ENCODE measurements at regions of chr3 and their contacts with region 1.

Region 1: GRCh38 chr3:183895296-183895695 is 10.6 kb upstream of the PARL start:
- DNase-seq: no peak
- ATAC-seq: peak; percentile 77
- H3K4me3 ChIP-seq: no peak overlapping the region
- H3K4me1 ChIP-seq: no peaks in the 10 kb centered on the region
- CTCF ChIP-seq: peak; percentile 66

Region 2: GRCh38 chr3:183799461-183799860 is 95.8 kb before region 1 on chr3:
- intact Hi-C with region 1: no loop called
- DNase-seq: no peak
- ATAC-seq: no peak
- H3K4me3 ChIP-seq: no peak overlapping the region
- H3K4me1 ChIP-seq: no peaks in the 10 kb centered on the region
- CTCF ChIP-seq: no peak

Region 3: DNA sequence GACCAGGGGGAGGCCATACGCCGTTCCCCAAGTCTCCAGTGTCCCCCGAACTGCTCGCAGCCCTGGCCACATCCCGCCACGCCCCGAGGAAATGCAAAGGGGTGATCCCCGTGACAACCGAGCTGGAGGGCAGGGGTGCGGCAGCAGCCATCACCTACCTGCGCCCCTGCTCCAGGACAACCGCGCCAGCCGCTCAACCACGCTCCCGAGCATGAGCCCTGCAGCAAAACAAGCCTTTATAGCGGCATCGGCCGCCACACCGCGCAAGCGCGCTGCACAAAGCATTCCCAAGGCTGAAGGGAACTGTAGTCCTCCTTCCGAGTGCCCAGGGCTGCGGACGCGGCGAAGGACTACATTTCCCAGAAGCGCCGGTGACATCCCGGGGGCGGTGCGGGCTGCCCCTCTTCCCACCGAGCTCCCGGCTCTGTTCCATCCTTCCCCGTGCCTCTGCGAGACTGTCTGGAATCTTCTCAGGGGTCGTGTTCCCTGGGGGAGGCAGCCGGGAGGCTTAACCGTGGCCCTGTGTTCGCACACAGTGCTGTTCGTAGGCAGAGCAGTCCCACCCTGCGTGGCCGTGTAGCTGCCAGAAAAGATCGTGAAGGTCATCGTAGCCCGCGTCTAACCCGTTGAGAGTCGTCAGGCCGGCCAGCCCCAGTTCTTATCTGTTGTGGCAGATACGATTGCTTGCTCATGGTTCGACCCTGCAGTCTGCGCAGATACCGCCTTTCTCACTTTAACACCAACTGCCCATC is 122.6 kb after region 1 on chr3 and contains the start of gene ABCC5:
- intact Hi-C with region 1: loop called in 1 of 2 experiments (anchors 10 kb)
- DNase-seq: peak; percentile 92 to 95 (median 95)
- ATAC-seq: peak; percentile 97
- H3K4me3 ChIP-seq: peak within 1 kb of the TSS; percentile 92
- H3K4me1 ChIP-seq: peaks cover 20% of the 10 kb centered on the region
- CTCF ChIP-seq: peak; percentile 18
- total RNA-seq, gene ABCC5: 34.4 to 45.7 (median 39.4) TPM

Region 4: GRCh38 chr3:184058029-184058428 is 162.7 kb after region 1 on chr3:
- intact Hi-C with region 1: no loop called
- DNase-seq: no peak
- ATAC-seq: no peak
- H3K4me3 ChIP-seq: no peak overlapping the region
- H3K4me1 ChIP-seq: no peaks in the 10 kb centered on the region
- CTCF ChIP-seq: no peak

Region 5: GRCh38 chr3:184250167-184250828 is 355.0 kb after region 1 on chr3:
- intact Hi-C with region 1: loop called in 1 of 2 experiments (anchors 10 kb)
- DNase-seq: peak; percentile 87 to 99 (median 92)
- ATAC-seq: peak; percentile 79
- H3K4me3 ChIP-seq: peak overlapping the region; percentile 87
- H3K4me1 ChIP-seq: peaks cover 8% of the 10 kb centered on the region
- CTCF ChIP-seq: peak; percentile 92

Region 6: DNA sequence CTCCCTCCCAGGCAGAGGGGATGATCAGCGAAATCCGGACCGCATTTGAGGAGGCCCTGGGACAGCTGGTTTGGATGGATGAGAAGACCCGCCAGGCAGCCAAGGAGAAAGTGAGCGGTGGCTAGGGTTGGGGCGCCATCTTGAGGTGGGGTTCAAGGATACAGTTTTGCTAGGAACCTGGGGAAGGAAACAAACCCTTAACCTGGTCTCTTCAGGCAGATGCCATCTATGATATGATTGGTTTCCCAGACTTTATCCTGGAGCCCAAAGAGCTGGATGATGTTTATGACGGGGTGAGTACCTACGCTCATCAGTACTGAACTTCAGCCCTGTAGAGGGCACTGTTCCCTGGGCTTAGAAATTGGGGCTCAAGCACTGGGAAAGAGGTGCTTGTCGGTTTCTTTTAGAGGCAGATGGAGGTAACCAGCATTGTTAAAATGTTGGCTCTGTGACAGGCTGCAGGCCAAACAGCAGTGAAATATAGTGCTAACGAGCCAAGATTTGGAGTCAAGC is 394.2 kb after region 1 on chr3:
- intact Hi-C with region 1: loop called in 1 of 2 experiments (anchors 10 kb)
- DNase-seq: peak in 2 of 3 donors; percentile 56 to 73
- ATAC-seq: peak; percentile 73
- H3K4me3 ChIP-seq: no peak overlapping the region
- H3K4me1 ChIP-seq: no peaks in the 10 kb centered on the region
- CTCF ChIP-seq: peak; percentile 28

Region 7: GRCh38 chr3:184513276-184514170 is 618.2 kb after region 1 on chr3:
- intact Hi-C with region 1: no loop called
- DNase-seq: peak; percentile 78 to 93 (median 88)
- ATAC-seq: peak; percentile 99
- H3K4me3 ChIP-seq: no peak overlapping the region
- H3K4me1 ChIP-seq: peaks cover 6% of the 10 kb centered on the region
- CTCF ChIP-seq: peak; percentile 90

Measured in mucosa of descending colon (tissue), 3 donors.